Common myeloid progenitor, CD34-positive (primary cell): ENCODE measurements at regions of chr7 and their contacts with region 1.

Region 1: GRCh38 chr7:11228515-11228914 is 254.8 kb downstream of the PHF14 start:
- DNase-seq: peak in 2 of 3 donors; percentile 21 to 44
- H3K4me3 ChIP-seq: no peak overlapping the region
- H3K27ac ChIP-seq: no peak overlapping the region
- H3K4me1 ChIP-seq: peaks cover 0 to 2% (median 0%) of the 10 kb centered on the region in 4 experiments
- H3K27me3 ChIP-seq: no peaks in the 10 kb centered on the region

Region 2: GRCh38 chr7:11212080-11212711 is 16.3 kb before region 1 on chr7:
- CTCF ChIA-PET with region 1: interaction called, 14 read pairs
- POLR2A ChIA-PET with region 1: no interaction called
- DNase-seq: peak; percentile 68 to 86 (median 82)
- H3K4me3 ChIP-seq: no peak overlapping the region
- H3K27ac ChIP-seq: no peak overlapping the region
- H3K4me1 ChIP-seq: peaks cover 3 to 19% (median 9%) of the 10 kb centered on the region in 4 experiments
- H3K27me3 ChIP-seq: no peaks in the 10 kb centered on the region

Region 3: DNA sequence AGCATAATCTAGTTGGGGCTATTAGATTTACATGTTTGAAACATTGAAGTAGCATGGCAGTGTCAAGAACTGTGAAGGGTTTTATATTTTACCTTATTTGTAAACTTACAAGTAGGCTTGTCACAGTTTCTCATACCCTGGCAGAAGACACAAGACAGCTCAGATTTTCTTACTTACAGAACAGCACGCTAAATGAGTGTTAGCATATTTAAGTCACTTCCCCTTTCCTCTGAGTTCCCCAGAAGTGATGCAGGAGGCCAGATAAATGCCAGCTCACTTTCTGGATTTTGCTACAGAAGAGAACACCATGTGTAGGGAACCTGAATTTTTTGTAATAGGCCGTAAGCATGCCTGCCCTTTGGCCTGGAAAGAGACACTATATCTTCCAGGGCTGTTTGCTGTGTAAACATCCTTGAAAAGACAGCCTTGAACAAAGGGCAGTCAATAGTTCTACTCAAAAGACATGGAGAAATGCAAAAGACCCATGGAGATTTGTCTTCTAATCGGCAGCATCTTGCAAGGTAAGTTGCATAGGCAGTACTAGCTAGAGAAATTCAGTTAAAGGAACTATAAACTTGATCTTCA is 24.3 kb after region 1 on chr7:
- CTCF ChIA-PET with region 1: no interaction called
- POLR2A ChIA-PET with region 1: no interaction called
- DNase-seq: peak in 2 of 3 donors; percentile 55 to 60
- H3K4me3 ChIP-seq: no peak overlapping the region
- H3K27ac ChIP-seq: no peak overlapping the region
- H3K4me1 ChIP-seq: no peaks in the 10 kb centered on the region
- H3K27me3 ChIP-seq: no peaks in the 10 kb centered on the region